Sigmoid colon (tissue), 7 donors: ENCODE measurements at regions of chr2 and their contacts with region 1.

Region 1: GRCh38 chr2:202870431-202871299 is 901 bp downstream of the ICA1L start:
- DNase-seq: peak; percentile 83
- H3K4me3 ChIP-seq: peak overlapping the region; percentile 60 to 86 (median 68)
- H3K27ac ChIP-seq: peak overlapping the region; percentile 82 to 89 (median 88)
- H3K4me1 ChIP-seq: peaks cover 0 to 14% (median 4%) of the 10 kb centered on the region in 4 donors
- H3K27me3 ChIP-seq: no peaks in the 10 kb centered on the region
- CTCF ChIP-seq: peak in 1 of 4 experiments; percentile 9
- EP300 ChIP-seq: no peak
- POLR2A ChIP-seq: no peak

Region 2: DNA sequence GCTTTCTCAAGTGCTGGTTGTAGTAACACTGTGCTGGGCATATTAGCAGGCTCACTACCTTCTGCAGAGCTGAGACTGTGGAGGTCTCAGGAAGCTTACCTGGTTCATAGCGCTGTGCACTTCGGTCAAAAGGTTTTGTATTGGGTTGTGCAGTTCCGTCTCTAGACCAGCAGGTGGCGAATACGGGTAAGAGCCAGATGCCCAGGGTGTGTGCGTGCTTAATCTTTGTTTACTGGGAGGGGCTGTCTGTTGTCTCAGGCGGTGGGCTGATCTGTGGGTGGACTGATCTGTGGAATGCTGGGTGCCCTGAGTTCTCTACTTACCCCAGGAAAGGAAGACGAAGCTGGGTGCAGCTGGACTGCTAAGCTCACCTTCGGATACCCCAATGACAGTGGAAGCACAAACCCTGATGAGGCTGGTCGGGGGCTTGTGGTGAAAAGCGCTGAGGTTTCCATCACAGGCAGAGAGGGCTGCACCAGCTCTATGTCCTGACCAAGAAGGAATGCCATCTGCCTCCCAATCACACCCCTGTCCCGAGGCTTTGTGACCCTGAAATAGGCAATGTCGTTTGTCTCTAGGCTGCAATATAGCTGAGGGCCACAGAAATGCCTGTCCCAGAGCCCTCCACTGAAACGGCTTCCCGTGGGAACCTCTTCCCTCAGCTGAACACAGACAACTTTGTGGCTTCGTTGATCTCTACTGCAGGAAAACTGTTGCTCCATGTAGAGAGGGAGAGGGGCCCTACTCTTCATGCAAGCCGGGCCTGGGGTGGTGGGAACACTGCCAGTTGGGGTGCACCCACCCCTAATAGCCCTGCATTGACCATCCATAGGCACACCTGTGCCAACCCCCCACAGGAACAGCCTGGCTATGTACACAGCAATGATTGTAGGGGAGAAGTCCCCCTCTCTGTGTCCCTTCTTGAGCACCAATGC is 281.8 kb before region 1 on chr2:
- intact Hi-C with region 1: loop called (anchors 2 kb)
- DNase-seq: peak; percentile 86
- H3K4me3 ChIP-seq: peak overlapping the region in 3 of 4 donors; percentile 5 to 17 (median 13)
- H3K27ac ChIP-seq: no peak overlapping the region
- H3K4me1 ChIP-seq: peaks cover 0 to 9% (median 8%) of the 10 kb centered on the region in 4 donors
- H3K27me3 ChIP-seq: no peaks in the 10 kb centered on the region
- CTCF ChIP-seq: peak; percentile 69 to 96 (median 92)
- EP300 ChIP-seq: no peak
- POLR2A ChIP-seq: no peak

Region 3: GRCh38 chr2:202743613-202744012 is 127.1 kb before region 1 on chr2:
- intact Hi-C with region 1: no loop called
- DNase-seq: no peak
- H3K4me3 ChIP-seq: no peak overlapping the region
- H3K27ac ChIP-seq: no peak overlapping the region
- H3K4me1 ChIP-seq: no peaks in the 10 kb centered on the region
- H3K27me3 ChIP-seq: no peaks in the 10 kb centered on the region
- CTCF ChIP-seq: no peak
- EP300 ChIP-seq: no peak
- POLR2A ChIP-seq: no peak

Region 4: DNA sequence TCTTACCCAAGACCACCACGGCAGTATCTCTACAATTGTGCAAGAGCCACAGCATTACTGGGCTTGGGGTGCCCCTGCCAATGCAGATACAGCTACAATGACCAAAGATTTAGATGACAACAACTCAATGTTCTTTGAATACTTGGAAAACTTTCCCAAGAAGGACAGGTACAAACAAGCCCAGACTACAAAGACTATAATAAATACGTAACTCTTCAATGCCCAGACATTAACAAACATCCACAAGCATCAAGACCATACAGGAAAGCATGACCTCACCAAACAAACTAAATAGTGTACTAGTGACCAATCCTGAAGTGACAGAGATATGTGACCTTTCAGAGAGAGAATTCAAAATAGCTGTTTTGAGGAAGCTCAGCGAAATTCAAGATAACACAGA is 61.9 kb before region 1 on chr2:
- intact Hi-C with region 1: loop called (anchors 5 kb)
- DNase-seq: no peak
- H3K4me3 ChIP-seq: no peak overlapping the region
- H3K27ac ChIP-seq: no peak overlapping the region
- H3K4me1 ChIP-seq: peaks cover 0 to 29% (median 12%) of the 10 kb centered on the region in 4 donors
- H3K27me3 ChIP-seq: no peaks in the 10 kb centered on the region
- CTCF ChIP-seq: no peak
- EP300 ChIP-seq: no peak
- POLR2A ChIP-seq: no peak

Region 5: DNA sequence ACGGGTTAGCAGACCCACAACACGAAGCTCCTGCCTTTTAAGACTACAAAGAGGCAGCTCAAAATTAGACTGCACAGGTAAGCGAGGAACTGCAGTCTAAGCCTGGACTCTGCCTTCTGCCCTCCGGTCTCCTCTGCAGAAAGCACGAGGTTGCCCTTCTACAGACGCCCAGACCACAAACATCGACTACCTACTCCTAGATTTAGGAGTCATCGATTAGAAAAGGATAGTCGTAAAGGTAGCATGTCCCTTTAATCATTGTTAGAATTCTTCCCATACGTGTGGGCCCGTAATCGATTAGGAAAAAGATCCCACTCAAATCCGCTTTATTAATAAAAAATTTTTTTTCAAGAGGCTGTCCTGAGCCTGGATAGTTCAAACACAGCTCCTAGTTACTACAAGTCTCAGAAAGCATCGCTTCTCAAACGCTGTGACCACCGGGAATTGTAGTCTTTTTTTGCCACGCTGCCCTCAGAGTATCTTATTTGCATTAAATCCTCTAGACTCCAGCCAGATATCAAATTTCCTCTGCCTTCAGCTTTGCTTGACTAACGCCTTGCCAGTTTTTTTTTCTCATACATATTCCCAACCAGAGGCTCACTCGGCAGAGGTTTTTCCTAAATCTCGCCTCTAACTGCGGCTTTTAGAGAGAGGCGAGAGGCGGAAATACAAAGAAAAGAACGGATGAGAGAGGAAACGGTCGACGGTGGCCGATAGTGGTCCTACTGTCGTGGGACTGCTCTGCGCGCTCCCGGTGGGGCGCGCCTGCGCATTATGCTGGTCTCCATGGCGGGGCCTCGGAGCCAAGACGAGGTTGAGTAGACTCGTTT is 41.1 kb after region 1 on chr2 and contains the starts of genes CARF and WDR12:
- intact Hi-C with region 1: loop called (anchors 5 kb)
- DNase-seq: peak; percentile 96
- H3K4me3 ChIP-seq: peak within 1 kb of the TSS; percentile 55 to 78 (median 62)
- H3K27ac ChIP-seq: peak within 1 kb of the TSS; percentile 83 to 88 (median 86)
- H3K4me1 ChIP-seq: peaks cover 0 to 29% (median 18%) of the 10 kb centered on the region in 4 donors
- H3K27me3 ChIP-seq: no peaks in the 10 kb centered on the region
- CTCF ChIP-seq: no peak
- EP300 ChIP-seq: no peak
- POLR2A ChIP-seq: peak; percentile 53 to 55
- total RNA-seq, gene CARF: 15.9 to 23.5 (median 18.9) TPM
- total RNA-seq, gene WDR12: 3.3 to 23.0 (median 10.9) TPM